GM10248 (cell line): ENCODE measurements at regions of chr6 and their contacts with region 1.

Region 1: GRCh38 chr6:130872250-130873095 is 45.3 kb downstream of the SMLR1 start:
- DNase-seq: peak; percentile 40
- CTCF ChIP-seq: peak; percentile 87

Region 2: GRCh38 chr6:130848945-130849344 is 23.5 kb before region 1 on chr6:
- CTCF ChIA-PET with region 1: interaction called, 23 read pairs
- POLR2A ChIA-PET with region 1: no interaction called
- DNase-seq: peak; percentile 23
- CTCF ChIP-seq: no peak

Region 3: GRCh38 chr6:130913120-130913519 is 40.6 kb after region 1 on chr6:
- CTCF ChIA-PET with region 1: no interaction called
- POLR2A ChIA-PET with region 1: no interaction called
- DNase-seq: peak; percentile 33
- CTCF ChIP-seq: no peak